ENCODE measurements at regions of chr18 and their contacts with region 1.

Region 1: GRCh38 chr18:69097349-69097748 is 299.5 kb downstream of the CCDC102B start:
- DNase-seq: no peak
- ATAC-seq: no peak

Region 2: GRCh38 chr18:68887410-68887809 is 209.9 kb before region 1 on chr18:
- intact Hi-C with region 1: no loop called
- DNase-seq: no peak
- ATAC-seq: no peak

Region 3: DNA sequence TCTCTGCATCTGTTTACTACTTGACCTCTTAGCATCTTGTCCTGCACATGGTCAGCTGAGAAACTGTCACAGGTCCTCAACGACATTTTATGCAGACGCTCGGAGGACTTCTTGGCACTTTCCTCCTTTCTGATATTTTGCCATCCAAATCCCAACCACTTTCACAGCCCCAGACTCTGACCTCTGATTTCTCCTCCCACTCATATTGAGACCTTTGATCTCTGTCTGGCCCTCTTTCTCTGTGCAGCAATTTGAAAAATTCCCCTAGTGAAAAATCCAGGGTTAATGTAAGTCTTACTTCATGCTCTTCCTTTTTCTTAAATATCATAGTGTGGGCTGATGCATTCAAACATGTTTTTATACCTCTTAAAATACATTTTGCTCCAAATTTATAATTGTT is 25.7 kb before region 1 on chr18:
- intact Hi-C with region 1: loop called in 1 of 2 experiments (anchors 2 kb)
- DNase-seq: no peak
- ATAC-seq: no peak

Region 4: GRCh38 chr18:69250305-69251151 is 153.2 kb after region 1 on chr18:
- intact Hi-C with region 1: no loop called
- DNase-seq: no peak
- ATAC-seq: peak in 1 of 2 donors; percentile 57

Measured in left cardiac atrium (tissue), 4 donors.